ENCODE measurements at regions of chr3 and their contacts with region 1.

Region 1: DNA sequence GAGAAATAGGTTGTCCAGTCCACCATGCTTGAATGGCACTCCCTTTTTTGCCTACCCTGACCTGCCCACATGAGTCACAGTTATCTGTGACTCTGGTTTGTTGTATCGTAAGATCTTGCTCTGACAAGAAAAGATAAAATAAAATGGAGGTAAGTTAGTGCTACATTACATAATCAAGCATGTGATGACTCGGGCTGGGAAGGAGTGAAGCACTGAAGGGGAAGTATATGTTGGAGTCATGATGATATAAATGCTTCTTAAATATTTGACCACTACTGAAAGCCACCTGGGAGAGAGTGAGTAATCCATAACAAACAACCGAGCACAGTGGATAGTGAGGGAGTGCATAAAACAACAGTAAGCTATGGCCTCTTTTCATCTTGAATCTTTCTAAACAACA is 124.4 kb downstream of the SHOX2 start:
- DNase-seq: peak; percentile 90
- ATAC-seq: peak; percentile 92
- H3K4me3 ChIP-seq: peak overlapping the region; percentile 11; the same call in 1 of the 2 replicates
- H3K27ac ChIP-seq: peak overlapping the region; percentile 92
- H3K4me1 ChIP-seq: peaks cover 34% of the 10 kb centered on the region
- H3K27me3 ChIP-seq: no peaks in the 10 kb centered on the region
- CTCF ChIP-seq: no peak

Region 2: DNA sequence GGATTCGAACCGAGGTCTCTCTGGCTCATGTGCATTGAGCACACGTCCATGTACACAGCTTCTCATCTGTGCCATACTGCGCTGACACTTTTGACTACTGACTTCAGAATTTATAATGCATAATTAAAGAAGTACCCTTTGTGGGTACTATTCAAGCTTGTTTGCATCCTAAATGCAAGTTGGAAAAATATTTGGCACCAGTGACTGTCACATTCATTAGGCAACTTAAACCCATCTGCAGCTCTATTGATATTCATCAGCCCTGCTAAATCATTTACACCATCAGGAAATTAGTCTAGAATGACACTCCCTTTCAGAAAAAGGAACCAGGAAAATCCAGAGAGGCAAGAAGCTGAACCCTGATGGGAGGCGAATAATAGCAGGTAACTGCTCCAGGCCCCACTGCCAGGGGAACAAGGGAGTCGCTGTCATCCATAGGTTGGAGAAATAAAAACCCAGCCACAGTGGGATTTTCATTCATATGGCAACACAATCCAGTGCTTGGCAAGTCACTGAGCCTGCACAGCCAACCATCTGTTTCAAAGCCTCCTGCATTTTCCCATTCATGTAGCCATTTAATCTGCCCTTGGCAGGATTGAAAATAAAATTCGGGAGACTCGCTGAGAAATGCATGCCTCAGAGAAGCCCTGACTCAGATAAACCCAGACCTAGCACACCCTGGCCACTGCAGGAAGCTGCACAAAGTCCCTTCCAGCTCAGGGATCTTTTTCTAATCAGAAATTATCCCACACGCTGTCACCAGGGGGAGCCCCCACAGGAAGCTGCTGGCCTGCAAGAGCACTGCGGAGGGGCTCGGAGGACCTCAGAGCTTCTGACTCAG is 375.6 kb before region 1 on chr3:
- CTCF ChIA-PET with region 1: no interaction called
- POLR2A ChIA-PET with region 1: no interaction called
- intact Hi-C with region 1: no loop called
- DNase-seq: peak; percentile 90
- ATAC-seq: peak; percentile 99
- H3K4me3 ChIP-seq: peak overlapping the region; percentile 21; the same call in 1 of the 2 replicates
- H3K27ac ChIP-seq: no peak overlapping the region
- H3K4me1 ChIP-seq: peaks cover 4% of the 10 kb centered on the region; the same call in 1 of the 2 replicates
- H3K27me3 ChIP-seq: no peaks in the 10 kb centered on the region
- CTCF ChIP-seq: peak; percentile 93

Region 3: DNA sequence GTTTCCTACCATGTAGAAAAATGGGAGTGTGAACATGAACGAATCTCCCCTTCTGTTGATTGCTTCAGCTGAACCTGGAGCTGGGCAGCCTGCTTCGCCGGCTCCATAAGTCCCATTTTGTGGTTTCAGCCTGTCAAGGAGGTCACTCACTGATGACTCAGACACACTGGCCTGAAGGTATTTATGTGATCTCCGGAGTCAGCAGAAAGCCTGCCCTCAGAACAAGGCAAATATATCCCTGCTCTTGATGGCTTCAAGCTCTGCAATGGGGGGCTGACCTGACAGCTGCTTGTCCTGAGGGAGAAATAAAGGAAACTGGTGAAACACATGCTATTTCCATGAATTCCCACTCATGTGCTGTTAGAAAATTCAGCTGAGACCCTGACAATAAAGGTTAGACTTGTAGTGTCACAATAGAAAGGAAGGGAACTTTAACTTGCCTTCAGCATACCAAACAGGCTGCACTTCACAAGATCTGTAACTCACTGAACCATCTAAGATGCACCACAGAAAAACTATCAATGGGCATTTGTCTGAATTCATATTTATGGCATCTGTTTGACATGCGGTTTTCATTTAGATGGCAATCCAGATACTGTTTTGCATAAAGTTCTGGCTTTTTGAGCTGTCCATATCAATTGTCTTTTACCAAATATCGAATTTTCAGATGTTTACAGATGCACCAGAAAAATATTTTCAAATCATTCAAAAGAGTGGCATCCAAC is 196.6 kb before region 1 on chr3:
- CTCF ChIA-PET with region 1: no interaction called
- POLR2A ChIA-PET with region 1: no interaction called
- intact Hi-C with region 1: loop called (anchors 5 kb)
- DNase-seq: peak; percentile 97
- ATAC-seq: peak; percentile 89
- H3K4me3 ChIP-seq: peak overlapping the region; percentile 37; the same call in 1 of the 2 replicates
- H3K27ac ChIP-seq: peak overlapping the region; percentile 83
- H3K4me1 ChIP-seq: peaks cover 66% of the 10 kb centered on the region
- H3K27me3 ChIP-seq: no peaks in the 10 kb centered on the region
- CTCF ChIP-seq: no peak

Region 4: GRCh38 chr3:157999246-157999645 is 17.4 kb after region 1 on chr3:
- CTCF ChIA-PET with region 1: no interaction called
- POLR2A ChIA-PET with region 1: no interaction called
- intact Hi-C with region 1: loop called (anchors 1 kb)
- DNase-seq: peak; percentile 55
- ATAC-seq: peak; percentile 89
- H3K4me3 ChIP-seq: no peak overlapping the region
- H3K27ac ChIP-seq: peak overlapping the region; percentile 41; the same call in 1 of the 2 replicates
- H3K4me1 ChIP-seq: peaks cover 8% of the 10 kb centered on the region; the same call in 1 of the 2 replicates
- H3K27me3 ChIP-seq: no peaks in the 10 kb centered on the region
- CTCF ChIP-seq: no peak

Region 5: DNA sequence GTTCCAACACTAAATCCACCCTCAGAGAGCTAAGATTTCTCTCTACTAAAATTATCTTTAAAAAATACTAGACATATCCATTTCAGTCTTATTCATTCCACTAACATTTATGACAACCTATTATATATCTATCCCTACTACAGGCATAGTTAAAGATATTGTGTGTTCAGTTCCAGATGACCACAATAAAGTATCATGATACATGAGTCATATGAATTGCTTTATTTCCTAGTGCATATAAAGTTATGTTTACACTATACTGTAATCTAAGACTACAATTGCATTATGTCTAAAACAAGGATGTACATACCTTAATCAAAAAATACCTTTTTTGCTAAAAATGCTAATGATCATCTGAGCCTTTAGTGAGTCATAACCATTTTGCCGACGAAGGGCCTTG is 105.0 kb after region 1 on chr3:
- CTCF ChIA-PET with region 1: no interaction called
- POLR2A ChIA-PET with region 1: no interaction called
- intact Hi-C with region 1: loop called (anchors 1 kb)
- DNase-seq: peak; percentile 86
- ATAC-seq: peak; percentile 97
- H3K4me3 ChIP-seq: no peak overlapping the region
- H3K27ac ChIP-seq: peak overlapping the region; percentile 75
- H3K4me1 ChIP-seq: peaks cover 31% of the 10 kb centered on the region
- H3K27me3 ChIP-seq: no peaks in the 10 kb centered on the region
- CTCF ChIP-seq: no peak

Region 6: DNA sequence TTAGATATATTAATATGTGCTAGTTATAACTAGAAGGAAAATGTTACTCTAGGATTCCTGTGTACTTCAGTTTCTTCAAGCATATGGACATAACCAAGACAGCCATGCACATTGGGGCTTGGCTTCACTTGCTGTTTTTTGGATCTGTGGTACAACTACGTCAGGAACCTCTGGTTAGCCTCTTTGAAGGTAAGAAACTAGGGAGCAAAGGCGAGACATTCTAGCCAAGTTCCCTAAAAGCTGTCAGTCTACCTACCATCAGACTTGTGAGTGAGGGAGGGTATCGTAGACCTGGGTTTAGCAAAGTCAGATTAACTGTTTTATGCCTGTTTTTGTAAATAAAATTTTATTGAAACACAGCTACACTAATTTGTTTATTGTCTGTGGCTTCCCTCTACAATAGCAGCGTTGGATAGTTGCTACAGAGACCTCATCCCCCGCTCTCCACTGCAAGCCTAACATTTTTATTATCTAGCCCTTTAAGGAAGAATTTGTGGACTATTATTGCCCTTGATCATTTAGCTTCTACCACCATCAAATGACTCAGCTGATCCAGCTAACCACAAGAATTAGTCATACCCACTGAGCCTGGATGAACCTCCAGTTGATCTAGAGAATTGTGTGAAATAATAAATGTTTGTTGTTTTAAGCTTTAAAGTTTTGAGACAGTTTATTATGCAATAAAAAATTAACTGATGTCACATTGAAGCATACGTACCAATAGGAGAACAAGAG is 186.1 kb after region 1 on chr3:
- CTCF ChIA-PET with region 1: no interaction called
- POLR2A ChIA-PET with region 1: interaction called, 4 read pairs
- intact Hi-C with region 1: loop called (anchors 2 kb)
- DNase-seq: peak; percentile 90
- ATAC-seq: peak; percentile 94
- H3K4me3 ChIP-seq: no peak overlapping the region
- H3K27ac ChIP-seq: peak overlapping the region; percentile 49
- H3K4me1 ChIP-seq: peaks cover 26% of the 10 kb centered on the region
- H3K27me3 ChIP-seq: no peaks in the 10 kb centered on the region
- CTCF ChIP-seq: no peak

Measured in PC-3 (cell line).